ENCODE measurements at regions of chr5 and their contacts with region 1.

Region 1: GRCh38 chr5:154647114-154647760 is 107.9 kb upstream of the LARP1 start:
- DNase-seq: no peak
- H3K4me3 ChIP-seq: peak overlapping the region in 1 of 2 donors; percentile 40
- H3K4me3 Mint-ChIP-seq: peak overlapping the region; percentile 69 to 85 (median 80)
- H3K27ac ChIP-seq: no peak overlapping the region
- H3K27ac Mint-ChIP-seq: peak overlapping the region in 3 of 7 donors; percentile 35 to 77 (median 47)
- H3K4me1 ChIP-seq: peaks cover 10% of the 10 kb centered on the region
- H3K4me1 Mint-ChIP-seq: peaks cover 1 to 16% (median 7%) of the 10 kb centered on the region in 4 donors
- H3K27me3 ChIP-seq: no peaks in the 10 kb centered on the region
- H3K27me3 Mint-ChIP-seq: peaks cover 13 to 24% of the 10 kb centered on the region in 2 donors

Region 2: DNA sequence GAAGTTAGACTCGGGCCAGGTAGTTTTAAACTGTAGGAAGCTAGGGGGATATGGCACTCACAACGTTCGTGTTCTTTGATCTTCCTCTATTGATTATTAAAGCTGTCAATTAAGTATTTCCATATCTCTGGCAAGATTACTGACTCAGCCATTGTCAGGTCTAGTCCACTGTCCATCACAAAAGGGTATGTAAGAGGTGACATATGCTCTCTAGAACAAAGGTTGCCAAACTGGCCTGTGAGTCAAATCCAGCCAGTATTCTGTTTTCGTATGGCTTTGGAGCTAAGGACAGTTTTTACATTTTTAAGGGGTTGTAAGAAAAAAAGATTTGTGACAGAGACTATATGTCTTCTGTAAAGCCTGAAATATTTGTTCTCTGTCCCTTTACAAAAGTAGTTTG is 158.9 kb after region 1 on chr5:
- CTCF ChIA-PET with region 1: interaction called, 31 read pairs
- POLR2A ChIA-PET with region 1: interaction called, 3 read pairs
- intact Hi-C with region 1: no loop called
- DNase-seq: no peak
- H3K4me3 ChIP-seq: no peak overlapping the region
- H3K4me3 Mint-ChIP-seq: no peak overlapping the region
- H3K27ac ChIP-seq: no peak overlapping the region
- H3K27ac Mint-ChIP-seq: no peak overlapping the region
- H3K4me1 ChIP-seq: no peaks in the 10 kb centered on the region
- H3K4me1 Mint-ChIP-seq: no peaks in the 10 kb centered on the region
- H3K27me3 ChIP-seq: no peaks in the 10 kb centered on the region
- H3K27me3 Mint-ChIP-seq: no peaks in the 10 kb centered on the region

Region 3: GRCh38 chr5:154811653-154812365 is 164.6 kb after region 1 on chr5:
- CTCF ChIA-PET with region 1: interaction called, 31 read pairs
- POLR2A ChIA-PET with region 1: interaction called, 3 read pairs
- intact Hi-C with region 1: loop called (anchors 1 kb)
- DNase-seq: peak; percentile 58 to 66 (median 62)
- H3K4me3 ChIP-seq: no peak overlapping the region
- H3K4me3 Mint-ChIP-seq: peak overlapping the region in 1 of 8 donors; percentile 16
- H3K27ac ChIP-seq: no peak overlapping the region
- H3K27ac Mint-ChIP-seq: peak overlapping the region in 4 of 7 donors; percentile 9 to 91 (median 46)
- H3K4me1 ChIP-seq: peaks cover 15% of the 10 kb centered on the region
- H3K4me1 Mint-ChIP-seq: peaks cover 14 to 37% (median 21%) of the 10 kb centered on the region in 4 donors
- H3K27me3 ChIP-seq: no peaks in the 10 kb centered on the region
- H3K27me3 Mint-ChIP-seq: no peaks in the 10 kb centered on the region

Region 4: GRCh38 chr5:154868702-154869101 is 221.5 kb after region 1 on chr5:
- CTCF ChIA-PET with region 1: interaction called, 20 read pairs
- POLR2A ChIA-PET with region 1: no interaction called
- intact Hi-C with region 1: no loop called
- DNase-seq: peak in 1 of 5 donors; percentile 16
- H3K4me3 ChIP-seq: no peak overlapping the region
- H3K4me3 Mint-ChIP-seq: no peak overlapping the region
- H3K27ac ChIP-seq: no peak overlapping the region
- H3K27ac Mint-ChIP-seq: peak overlapping the region in 3 of 7 donors; percentile 25 to 46 (median 37)
- H3K4me1 ChIP-seq: no peaks in the 10 kb centered on the region
- H3K4me1 Mint-ChIP-seq: peaks cover 10 to 22% (median 14%) of the 10 kb centered on the region in 4 donors
- H3K27me3 ChIP-seq: no peaks in the 10 kb centered on the region
- H3K27me3 Mint-ChIP-seq: no peaks in the 10 kb centered on the region

Region 5: GRCh38 chr5:154899151-154899816 is 252.0 kb after region 1 on chr5:
- CTCF ChIA-PET with region 1: interaction called, 10 read pairs
- POLR2A ChIA-PET with region 1: no interaction called
- intact Hi-C with region 1: loop called (anchors 10 kb)
- DNase-seq: no peak
- H3K4me3 ChIP-seq: no peak overlapping the region
- H3K4me3 Mint-ChIP-seq: no peak overlapping the region
- H3K27ac ChIP-seq: no peak overlapping the region
- H3K27ac Mint-ChIP-seq: peak overlapping the region in 1 of 7 donors; percentile 53
- H3K4me1 ChIP-seq: no peaks in the 10 kb centered on the region
- H3K4me1 Mint-ChIP-seq: no peaks in the 10 kb centered on the region
- H3K27me3 ChIP-seq: no peaks in the 10 kb centered on the region
- H3K27me3 Mint-ChIP-seq: no peaks in the 10 kb centered on the region

Region 6: GRCh38 chr5:154940772-154941620 is 293.8 kb after region 1 on chr5 and contains the start of gene MRPL22:
- CTCF ChIA-PET with region 1: interaction called, 3 read pairs
- POLR2A ChIA-PET with region 1: no interaction called
- intact Hi-C with region 1: loop called (anchors 2 kb)
- DNase-seq: peak; percentile 93 to 97 (median 94)
- H3K4me3 ChIP-seq: peak within 1 kb of the TSS; percentile 67 to 81
- H3K4me3 Mint-ChIP-seq: peak within 1 kb of the TSS; percentile 97 to 100 (median 98)
- H3K27ac ChIP-seq: peak within 1 kb of the TSS; percentile 69
- H3K27ac Mint-ChIP-seq: peak within 1 kb of the TSS; percentile 97 to 100 (median 98)
- H3K4me1 ChIP-seq: peaks cover 38% of the 10 kb centered on the region
- H3K4me1 Mint-ChIP-seq: peaks cover 29 to 60% (median 44%) of the 10 kb centered on the region in 4 donors
- H3K27me3 ChIP-seq: no peaks in the 10 kb centered on the region
- H3K27me3 Mint-ChIP-seq: no peaks in the 10 kb centered on the region
- total RNA-seq, gene MRPL22: 28.0 to 33.1 TPM

Measured in CD4-positive, alpha-beta memory T cell (primary cell).